CD4-positive, alpha-beta memory T cell (primary cell): ENCODE measurements at regions of chr22 and their contacts with region 1.

Region 1: GRCh38 chr22:29245637-29246385 is 22.0 kb downstream of the RHBDD3 start:
- DNase-seq: peak; percentile 46 to 62 (median 58)
- H3K4me3 ChIP-seq: no peak overlapping the region
- H3K4me3 Mint-ChIP-seq: no peak overlapping the region
- H3K27ac ChIP-seq: no peak overlapping the region
- H3K27ac Mint-ChIP-seq: no peak overlapping the region
- H3K4me1 ChIP-seq: no peaks in the 10 kb centered on the region
- H3K4me1 Mint-ChIP-seq: peaks cover 0 to 2% (median under 1%) of the 10 kb centered on the region in 4 donors
- H3K27me3 ChIP-seq: no peaks in the 10 kb centered on the region
- H3K27me3 Mint-ChIP-seq: peaks cover 9 to 17% of the 10 kb centered on the region in 2 donors

Region 2: GRCh38 chr22:28600546-28601143 is 645.2 kb before region 1 on chr22:
- CTCF ChIA-PET with region 1: interaction called, 10 read pairs
- POLR2A ChIA-PET with region 1: no interaction called
- intact Hi-C with region 1: no loop called
- DNase-seq: peak; percentile 31 to 63 (median 59)
- H3K4me3 ChIP-seq: no peak overlapping the region
- H3K4me3 Mint-ChIP-seq: no peak overlapping the region
- H3K27ac ChIP-seq: no peak overlapping the region
- H3K27ac Mint-ChIP-seq: no peak overlapping the region
- H3K4me1 ChIP-seq: no peaks in the 10 kb centered on the region
- H3K4me1 Mint-ChIP-seq: no peaks in the 10 kb centered on the region
- H3K27me3 ChIP-seq: peaks cover 13% of the 10 kb centered on the region
- H3K27me3 Mint-ChIP-seq: peaks cover 6 to 14% of the 10 kb centered on the region in 2 donors

Region 3: GRCh38 chr22:29040385-29041275 is 205.2 kb before region 1 on chr22:
- CTCF ChIA-PET with region 1: interaction called, 27 read pairs
- POLR2A ChIA-PET with region 1: no interaction called
- intact Hi-C with region 1: no loop called
- DNase-seq: peak; percentile 62 to 68 (median 67)
- H3K4me3 ChIP-seq: no peak overlapping the region
- H3K4me3 Mint-ChIP-seq: no peak overlapping the region
- H3K27ac ChIP-seq: no peak overlapping the region
- H3K27ac Mint-ChIP-seq: no peak overlapping the region
- H3K4me1 ChIP-seq: no peaks in the 10 kb centered on the region
- H3K4me1 Mint-ChIP-seq: peaks cover 0 to 3% (median 0%) of the 10 kb centered on the region in 4 donors
- H3K27me3 ChIP-seq: no peaks in the 10 kb centered on the region
- H3K27me3 Mint-ChIP-seq: peaks cover 0 to 3% of the 10 kb centered on the region in 2 donors

Region 4: GRCh38 chr22:29202212-29203192 is 43.3 kb before region 1 on chr22:
- CTCF ChIA-PET with region 1: interaction called, 28 read pairs
- POLR2A ChIA-PET with region 1: interaction called, 5 read pairs
- intact Hi-C with region 1: no loop called
- DNase-seq: peak in 4 of 5 donors; percentile 9 to 55 (median 22)
- H3K4me3 ChIP-seq: no peak overlapping the region
- H3K4me3 Mint-ChIP-seq: peak overlapping the region; percentile 20 to 74 (median 43)
- H3K27ac ChIP-seq: no peak overlapping the region
- H3K27ac Mint-ChIP-seq: peak overlapping the region in 6 of 7 donors; percentile 71 to 95 (median 76)
- H3K4me1 ChIP-seq: peaks cover 17% of the 10 kb centered on the region
- H3K4me1 Mint-ChIP-seq: peaks cover 12 to 27% (median 17%) of the 10 kb centered on the region in 4 donors
- H3K27me3 ChIP-seq: no peaks in the 10 kb centered on the region
- H3K27me3 Mint-ChIP-seq: peaks cover 12 to 29% of the 10 kb centered on the region in 2 donors